Endothelial cell of umbilical vein (primary cell): ENCODE measurements at regions of chr20 and their contacts with region 1.

Region 1: GRCh38 chr20:23086056-23086566 is at the start of gene CD93:
- DNase-seq: peak; percentile 95
- H3K4me3 ChIP-seq: peak within 1 kb of the TSS; percentile 30 to 93 (median 82)
- H3K27ac ChIP-seq: peak within 1 kb of the TSS; percentile 98
- H3K4me1 ChIP-seq: peaks cover 53% of the 10 kb centered on the region
- H3K27me3 ChIP-seq: no peaks in the 10 kb centered on the region
- CTCF ChIP-seq: peak in 1 of 2 donors; percentile 14
- POLR2A ChIP-seq: peak; percentile 68
- total RNA-seq, gene CD93: 346 and 413 TPM in 2 replicates

Region 2: GRCh38 chr20:22949331-22950109 is 136.6 kb before region 1 on chr20:
- CTCF ChIA-PET with region 1: no interaction called
- POLR2A ChIA-PET with region 1: no interaction called
- dilution Hi-C with region 1: no loop called
- intact Hi-C with region 1: no loop called
- DNase-seq: peak; percentile 35
- H3K4me3 ChIP-seq: no peak overlapping the region
- H3K27ac ChIP-seq: no peak overlapping the region
- H3K4me1 ChIP-seq: no peaks in the 10 kb centered on the region
- H3K27me3 ChIP-seq: peaks cover 0 to 5% of the 10 kb centered on the region in 2 experiments
- CTCF ChIP-seq: no peak
- POLR2A ChIP-seq: no peak

Region 3: DNA sequence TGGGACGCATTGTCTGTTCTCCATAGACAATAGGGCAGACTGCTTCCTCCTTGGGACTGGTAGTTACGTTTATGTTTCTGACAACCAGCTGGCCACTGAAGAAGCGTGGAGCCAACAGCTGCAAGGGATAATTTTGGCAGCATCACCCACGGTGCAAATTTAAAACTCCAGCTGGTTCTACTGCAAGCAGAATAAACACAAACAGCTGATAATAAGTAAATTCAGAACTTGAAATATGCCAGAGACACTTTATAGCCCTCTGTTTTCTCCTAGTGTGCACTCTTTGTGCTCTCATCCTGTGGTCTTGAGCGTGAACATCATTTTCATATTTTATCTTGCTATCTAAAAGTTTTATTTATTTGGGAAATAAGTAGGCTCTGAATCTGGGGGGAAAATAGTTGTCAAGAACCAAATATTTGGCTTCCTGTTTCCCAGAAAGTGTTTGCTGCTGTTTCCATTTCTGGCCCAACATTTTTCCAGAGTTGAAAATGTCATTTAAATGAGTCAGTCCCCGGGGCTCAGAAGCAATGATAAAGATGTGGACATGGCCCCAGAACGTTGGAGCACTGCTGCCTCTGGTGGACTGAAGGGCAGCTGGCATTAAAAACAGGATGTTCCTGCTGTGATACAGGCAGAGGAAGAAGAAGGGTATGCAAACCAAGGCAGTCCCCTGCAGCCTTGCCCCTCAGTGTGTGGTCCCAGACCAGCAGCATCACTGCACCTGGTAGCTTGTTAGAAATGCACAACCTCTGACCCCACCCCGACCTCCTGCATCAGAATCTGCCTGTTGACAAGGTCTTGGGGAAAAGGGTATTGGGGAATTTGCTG is 24.2 kb before region 1 on chr20:
- CTCF ChIA-PET with region 1: interaction called, 6 read pairs
- POLR2A ChIA-PET with region 1: no interaction called
- dilution Hi-C with region 1: no loop called
- intact Hi-C with region 1: loop called (anchors 1 kb)
- DNase-seq: peak; percentile 92
- H3K4me3 ChIP-seq: no peak overlapping the region
- H3K27ac ChIP-seq: peak overlapping the region; percentile 74
- H3K4me1 ChIP-seq: peaks cover 29% of the 10 kb centered on the region
- H3K27me3 ChIP-seq: no peaks in the 10 kb centered on the region
- CTCF ChIP-seq: peak; percentile 57 to 69
- POLR2A ChIP-seq: no peak

Region 4: DNA sequence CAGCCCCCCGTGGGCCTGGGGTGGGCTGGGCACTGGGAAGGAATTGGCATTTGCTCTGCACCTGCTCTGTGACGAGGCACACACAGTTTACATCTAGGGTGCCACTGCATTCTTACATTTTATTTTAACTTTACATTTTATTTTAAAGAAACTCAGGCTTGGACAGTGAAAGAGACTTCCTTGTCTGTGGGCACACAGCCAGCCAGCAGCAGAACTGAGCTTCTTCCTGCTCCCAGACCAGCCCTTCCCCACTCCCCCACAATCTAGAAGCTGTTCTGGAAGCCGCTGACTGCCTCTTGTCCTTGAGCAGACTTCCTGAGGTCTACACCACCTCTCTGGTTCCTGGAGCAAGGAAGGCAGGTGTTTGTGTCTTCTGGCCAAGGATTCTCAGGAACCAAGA is 27.9 kb after region 1 on chr20:
- CTCF ChIA-PET with region 1: no interaction called
- POLR2A ChIA-PET with region 1: no interaction called
- dilution Hi-C with region 1: no loop called
- intact Hi-C with region 1: no loop called
- DNase-seq: no peak
- H3K4me3 ChIP-seq: no peak overlapping the region
- H3K27ac ChIP-seq: no peak overlapping the region
- H3K4me1 ChIP-seq: no peaks in the 10 kb centered on the region
- H3K27me3 ChIP-seq: no peaks in the 10 kb centered on the region
- CTCF ChIP-seq: no peak
- POLR2A ChIP-seq: no peak

Region 5: DNA sequence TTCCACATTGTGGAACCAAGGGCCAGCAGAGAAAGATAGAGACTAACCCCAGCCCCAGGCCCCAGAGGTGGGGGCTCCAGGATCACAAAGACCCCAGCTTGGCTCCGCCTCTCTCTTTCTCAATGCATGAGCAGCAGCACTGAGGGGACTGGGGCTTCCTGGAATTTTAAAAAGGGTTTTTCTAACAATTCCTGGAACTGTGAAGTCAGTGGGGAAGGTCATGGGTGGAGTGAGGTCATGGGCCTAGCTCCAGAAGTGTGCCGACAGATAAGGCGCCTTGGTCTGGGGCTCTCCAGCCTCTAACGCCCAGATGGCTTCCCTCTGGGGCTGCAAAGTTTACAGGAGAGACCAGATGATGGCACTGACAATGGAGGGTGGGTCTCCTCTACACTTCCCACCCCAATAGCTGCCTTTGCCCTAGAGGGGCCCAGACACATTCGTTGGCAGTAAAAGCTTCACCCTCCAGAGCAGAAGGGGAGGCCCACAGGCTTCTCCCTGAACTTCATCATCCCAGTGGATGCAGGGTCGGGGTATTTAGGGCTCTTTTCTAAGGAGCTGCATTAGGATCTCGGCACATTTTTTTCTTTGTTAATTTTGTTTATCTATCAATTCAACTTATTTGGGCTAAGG is 46.9 kb after region 1 on chr20:
- CTCF ChIA-PET with region 1: interaction called, 3 read pairs
- POLR2A ChIA-PET with region 1: interaction called, 11 read pairs
- dilution Hi-C with region 1: no loop called
- intact Hi-C with region 1: no loop called
- DNase-seq: peak; percentile 87
- H3K4me3 ChIP-seq: no peak overlapping the region
- H3K27ac ChIP-seq: peak overlapping the region; percentile 68
- H3K4me1 ChIP-seq: peaks cover 28% of the 10 kb centered on the region
- H3K27me3 ChIP-seq: no peaks in the 10 kb centered on the region
- CTCF ChIP-seq: no peak
- POLR2A ChIP-seq: no peak

Region 6: GRCh38 chr20:23161968-23162696 is 76.0 kb after region 1 on chr20:
- CTCF ChIA-PET with region 1: interaction called, 12 read pairs
- POLR2A ChIA-PET with region 1: interaction called, 3 read pairs
- dilution Hi-C with region 1: no loop called
- intact Hi-C with region 1: no loop called
- DNase-seq: peak; percentile 58
- H3K4me3 ChIP-seq: no peak overlapping the region
- H3K27ac ChIP-seq: peak overlapping the region; percentile 49
- H3K4me1 ChIP-seq: peaks cover 35% of the 10 kb centered on the region
- H3K27me3 ChIP-seq: no peaks in the 10 kb centered on the region
- CTCF ChIP-seq: no peak
- POLR2A ChIP-seq: no peak

Region 7: DNA sequence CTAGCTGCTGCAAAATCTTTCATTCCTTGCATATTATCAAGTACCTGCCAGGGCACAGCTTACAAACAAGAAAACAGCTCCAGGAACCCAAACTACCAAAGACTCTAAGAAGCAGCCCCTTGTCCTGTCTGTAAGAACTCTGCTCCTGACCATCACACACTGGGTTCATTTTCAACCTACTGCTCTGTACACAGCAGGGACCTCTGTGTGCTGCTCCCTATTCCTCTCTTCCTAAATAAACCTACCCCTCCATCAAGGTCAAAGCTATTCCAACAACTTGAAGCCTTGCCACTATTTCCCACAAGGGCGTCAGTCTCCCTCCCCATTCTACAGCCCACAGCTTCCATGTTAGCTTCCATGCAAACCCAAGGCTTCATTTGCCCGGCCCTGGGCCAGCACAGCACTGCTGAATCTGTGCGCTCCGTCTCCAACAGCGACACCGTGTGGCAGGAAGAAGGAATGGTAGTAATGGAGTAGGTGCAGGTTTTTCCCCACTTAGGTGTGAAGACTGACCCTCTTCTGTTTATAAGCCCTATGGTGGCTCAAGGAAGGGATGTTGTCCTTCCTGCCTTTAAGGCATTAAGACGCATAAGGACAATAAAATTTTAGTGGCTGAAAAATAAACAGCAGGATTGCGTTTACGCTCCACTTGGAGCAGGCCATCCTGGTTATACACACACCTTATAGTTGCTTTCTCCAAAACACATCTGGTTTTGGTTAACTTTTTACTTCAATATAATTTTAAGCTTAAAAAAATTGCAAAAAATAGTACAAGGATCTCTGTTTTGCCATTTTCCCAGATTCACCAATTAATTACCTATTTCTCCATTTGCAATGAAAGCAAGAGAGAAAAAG is 149.3 kb after region 1 on chr20:
- CTCF ChIA-PET with region 1: interaction called, 19 read pairs
- POLR2A ChIA-PET with region 1: interaction called, 4 read pairs
- dilution Hi-C with region 1: no loop called
- intact Hi-C with region 1: loop called (anchors 1 kb)
- DNase-seq: peak; percentile 72
- H3K4me3 ChIP-seq: no peak overlapping the region
- H3K27ac ChIP-seq: no peak overlapping the region
- H3K4me1 ChIP-seq: peaks cover 5% of the 10 kb centered on the region
- H3K27me3 ChIP-seq: peaks cover 2 to 4% of the 10 kb centered on the region in 2 experiments
- CTCF ChIP-seq: peak; percentile 80 to 85
- POLR2A ChIP-seq: no peak

Region 8: GRCh38 chr20:23340524-23340923 is 254.4 kb after region 1 on chr20:
- CTCF ChIA-PET with region 1: interaction called, 17 read pairs
- POLR2A ChIA-PET with region 1: no interaction called
- dilution Hi-C with region 1: no loop called
- intact Hi-C with region 1: no loop called
- DNase-seq: peak; percentile 84
- H3K4me3 ChIP-seq: no peak overlapping the region
- H3K27ac ChIP-seq: no peak overlapping the region
- H3K4me1 ChIP-seq: no peaks in the 10 kb centered on the region
- H3K27me3 ChIP-seq: peaks cover 2 to 3% of the 10 kb centered on the region in 2 experiments
- CTCF ChIP-seq: peak; percentile 64 to 71
- POLR2A ChIP-seq: no peak